Common myeloid progenitor, CD34-positive (primary cell): ENCODE measurements at regions of chr12 and their contacts with region 1.

Region 1: DNA sequence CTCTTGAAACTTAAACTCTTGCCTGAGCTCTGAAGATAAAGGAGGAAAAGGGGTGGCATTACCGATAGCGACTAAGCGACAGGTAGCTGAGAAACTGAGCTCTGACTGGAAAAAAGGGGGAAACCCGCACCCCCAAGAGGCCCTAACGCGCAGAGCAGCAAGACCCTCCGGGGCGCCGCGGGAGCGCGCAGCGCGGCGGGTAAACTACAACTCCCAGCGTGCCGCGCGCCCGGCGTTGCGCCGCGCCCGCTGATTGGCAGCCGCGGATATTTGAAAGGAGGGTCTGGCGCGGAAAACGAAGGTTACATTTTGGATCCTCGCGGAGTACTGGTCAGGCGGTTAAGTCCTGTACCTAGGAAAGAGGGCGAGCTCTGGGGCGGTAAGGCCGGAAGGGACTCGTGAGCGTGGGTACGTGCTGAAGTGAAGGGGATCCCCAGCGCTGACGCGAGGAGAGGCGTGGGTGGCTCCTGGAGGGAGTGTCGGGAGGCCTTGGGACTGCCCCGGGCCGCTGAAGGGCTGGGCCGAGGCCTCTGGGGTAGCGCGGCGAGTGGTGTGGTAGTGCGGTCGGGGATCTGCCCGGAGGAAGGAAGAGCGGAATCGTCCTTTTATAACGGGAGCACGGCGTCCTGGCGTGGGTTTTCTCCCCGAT is at the start of gene ESPL1:
- DNase-seq: peak; percentile 87 to 93 (median 92)
- H3K4me3 ChIP-seq: peak within 1 kb of the TSS; percentile 72 to 97 (median 84)
- H3K27ac ChIP-seq: peak within 1 kb of the TSS; percentile 50 to 84
- H3K4me1 ChIP-seq: peaks cover 2 to 35% (median 18%) of the 10 kb centered on the region in 4 experiments
- H3K27me3 ChIP-seq: no peaks in the 10 kb centered on the region

Region 2: GRCh38 chr12:53180220-53180930 is 87.7 kb before region 1 on chr12 and contains the starts of genes CSAD and ZNF740:
- CTCF ChIA-PET with region 1: interaction called, 11 read pairs
- POLR2A ChIA-PET with region 1: interaction called, 4 read pairs
- DNase-seq: peak; percentile 97 to 98 (median 98)
- H3K4me3 ChIP-seq: peak within 1 kb of the TSS; percentile 51 to 87 (median 76)
- H3K27ac ChIP-seq: peak within 1 kb of the TSS; percentile 74 to 90
- H3K4me1 ChIP-seq: peaks cover 23 to 38% (median 32%) of the 10 kb centered on the region in 4 experiments
- H3K27me3 ChIP-seq: no peaks in the 10 kb centered on the region

Region 3: GRCh38 chr12:53251477-53252348 is 16.4 kb before region 1 on chr12:
- CTCF ChIA-PET with region 1: interaction called, 11 read pairs
- POLR2A ChIA-PET with region 1: no interaction called
- DNase-seq: peak; percentile 56 to 69 (median 63)
- H3K4me3 ChIP-seq: peak overlapping the region; percentile 59 to 92 (median 85)
- H3K27ac ChIP-seq: peak overlapping the region; percentile 50 to 81
- H3K4me1 ChIP-seq: peaks cover 2 to 46% (median 24%) of the 10 kb centered on the region in 4 experiments
- H3K27me3 ChIP-seq: no peaks in the 10 kb centered on the region

Region 4: GRCh38 chr12:53287741-53288216 is 19.7 kb after region 1 on chr12:
- CTCF ChIA-PET with region 1: interaction called, 175 read pairs
- POLR2A ChIA-PET with region 1: no interaction called
- DNase-seq: peak; percentile 69 to 80 (median 73)
- H3K4me3 ChIP-seq: no peak overlapping the region
- H3K27ac ChIP-seq: no peak overlapping the region
- H3K4me1 ChIP-seq: no peaks in the 10 kb centered on the region
- H3K27me3 ChIP-seq: no peaks in the 10 kb centered on the region

Region 5: GRCh38 chr12:53332744-53333143 is 64.6 kb after region 1 on chr12:
- CTCF ChIA-PET with region 1: no interaction called
- POLR2A ChIA-PET with region 1: no interaction called
- DNase-seq: no peak
- H3K4me3 ChIP-seq: no peak overlapping the region
- H3K27ac ChIP-seq: no peak overlapping the region
- H3K4me1 ChIP-seq: peaks cover 0 to 28% (median 17%) of the 10 kb centered on the region in 4 experiments
- H3K27me3 ChIP-seq: peaks cover 0 to 6% (median 3%) of the 10 kb centered on the region in 5 experiments

Region 6: DNA sequence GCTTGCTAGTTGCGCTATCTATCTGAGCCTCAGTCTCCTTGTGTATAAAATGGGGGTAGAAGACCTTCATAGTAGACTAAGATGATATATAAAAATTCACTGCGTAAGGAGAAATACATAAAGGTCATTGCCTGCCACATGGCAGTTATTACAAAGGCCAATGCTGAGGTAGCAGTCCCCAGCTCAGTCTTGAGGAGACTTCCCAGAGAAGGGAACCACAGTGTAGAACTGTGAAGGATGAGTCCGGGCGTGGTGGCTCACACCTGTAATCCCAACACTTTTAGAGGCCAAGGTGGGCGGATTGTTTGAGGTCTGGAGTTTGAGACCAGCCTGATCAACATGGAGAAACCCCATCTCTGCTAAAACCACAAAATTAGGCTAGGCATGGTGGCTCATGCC is 85.1 kb after region 1 on chr12:
- CTCF ChIA-PET with region 1: no interaction called
- POLR2A ChIA-PET with region 1: no interaction called
- DNase-seq: no peak
- H3K4me3 ChIP-seq: no peak overlapping the region
- H3K27ac ChIP-seq: no peak overlapping the region
- H3K4me1 ChIP-seq: peaks cover 1 to 8% (median 4%) of the 10 kb centered on the region in 4 experiments
- H3K27me3 ChIP-seq: no peaks in the 10 kb centered on the region